Prostate gland (tissue), 2 donors: ENCODE measurements at regions of chr11 and their contacts with region 1.

Region 1: DNA sequence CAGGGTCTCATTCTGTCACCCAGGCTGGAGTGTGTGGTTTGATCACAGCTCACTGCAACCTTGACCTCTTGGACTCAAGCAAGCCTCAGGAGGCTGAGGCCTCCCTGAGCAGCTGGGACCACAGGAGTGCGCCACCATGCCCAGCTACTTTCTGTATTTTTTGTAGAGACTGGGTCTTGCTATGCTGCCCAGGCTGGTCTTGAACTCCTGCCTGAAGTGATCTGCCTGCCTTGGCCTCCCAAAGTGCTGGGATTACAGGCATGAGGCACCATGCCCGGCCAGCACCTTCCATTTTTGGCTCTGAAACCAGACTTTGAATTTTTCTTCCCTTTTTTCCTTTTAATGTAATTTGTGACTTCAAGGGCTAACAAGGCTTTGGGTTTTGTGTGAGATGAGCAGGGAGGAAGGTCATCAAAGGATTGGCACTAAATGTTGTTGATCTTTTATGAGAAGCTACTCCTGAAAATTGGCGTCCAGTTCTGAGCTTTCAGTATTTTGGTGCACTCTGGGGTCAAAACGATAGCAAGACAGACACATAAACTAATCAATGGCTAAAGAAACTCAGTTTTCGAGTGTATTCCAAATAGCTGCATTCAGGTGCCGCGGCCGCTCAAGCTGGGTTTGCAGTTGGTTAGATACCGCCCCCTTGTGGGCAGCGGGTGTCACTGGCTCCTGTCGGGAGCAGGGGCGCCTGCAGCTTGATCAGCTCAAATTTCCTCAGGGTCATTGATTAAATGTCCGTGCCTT is 51.9 kb upstream of the CLMP start:
- DNase-seq: peak; percentile 51
- H3K4me3 ChIP-seq: no peak overlapping the region
- H3K27ac ChIP-seq: no peak overlapping the region
- H3K4me1 ChIP-seq: no peaks in the 10 kb centered on the region
- H3K27me3 ChIP-seq: no peaks in the 10 kb centered on the region
- CTCF ChIP-seq: peak; percentile 59 to 93 (median 80)
- POLR2A ChIP-seq: no peak

Region 2: DNA sequence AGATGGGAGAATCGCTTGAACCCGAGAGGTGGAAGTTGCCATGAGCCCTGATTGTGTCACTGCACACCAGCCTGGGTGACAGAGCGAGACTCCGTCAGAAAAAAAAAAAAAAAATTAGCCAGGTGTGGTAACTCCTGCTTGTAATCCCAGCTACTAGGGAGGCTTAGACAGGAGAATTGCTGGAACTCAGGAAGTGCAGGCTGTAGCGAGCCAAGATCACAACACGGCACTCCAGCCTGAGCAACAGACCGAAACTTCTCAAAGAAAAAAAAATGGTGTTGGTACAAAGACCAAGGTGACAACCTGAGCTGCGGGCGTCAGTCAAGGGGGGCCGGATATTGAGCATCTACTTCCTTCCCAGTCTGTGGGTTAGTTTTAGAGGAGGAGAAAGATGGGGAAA is 136.6 kb before region 1 on chr11:
- intact Hi-C with region 1: loop called (anchors 5 kb)
- DNase-seq: no peak
- H3K4me3 ChIP-seq: no peak overlapping the region
- H3K27ac ChIP-seq: no peak overlapping the region
- H3K4me1 ChIP-seq: no peaks in the 10 kb centered on the region
- H3K27me3 ChIP-seq: no peaks in the 10 kb centered on the region
- CTCF ChIP-seq: no peak
- POLR2A ChIP-seq: no peak

Region 3: DNA sequence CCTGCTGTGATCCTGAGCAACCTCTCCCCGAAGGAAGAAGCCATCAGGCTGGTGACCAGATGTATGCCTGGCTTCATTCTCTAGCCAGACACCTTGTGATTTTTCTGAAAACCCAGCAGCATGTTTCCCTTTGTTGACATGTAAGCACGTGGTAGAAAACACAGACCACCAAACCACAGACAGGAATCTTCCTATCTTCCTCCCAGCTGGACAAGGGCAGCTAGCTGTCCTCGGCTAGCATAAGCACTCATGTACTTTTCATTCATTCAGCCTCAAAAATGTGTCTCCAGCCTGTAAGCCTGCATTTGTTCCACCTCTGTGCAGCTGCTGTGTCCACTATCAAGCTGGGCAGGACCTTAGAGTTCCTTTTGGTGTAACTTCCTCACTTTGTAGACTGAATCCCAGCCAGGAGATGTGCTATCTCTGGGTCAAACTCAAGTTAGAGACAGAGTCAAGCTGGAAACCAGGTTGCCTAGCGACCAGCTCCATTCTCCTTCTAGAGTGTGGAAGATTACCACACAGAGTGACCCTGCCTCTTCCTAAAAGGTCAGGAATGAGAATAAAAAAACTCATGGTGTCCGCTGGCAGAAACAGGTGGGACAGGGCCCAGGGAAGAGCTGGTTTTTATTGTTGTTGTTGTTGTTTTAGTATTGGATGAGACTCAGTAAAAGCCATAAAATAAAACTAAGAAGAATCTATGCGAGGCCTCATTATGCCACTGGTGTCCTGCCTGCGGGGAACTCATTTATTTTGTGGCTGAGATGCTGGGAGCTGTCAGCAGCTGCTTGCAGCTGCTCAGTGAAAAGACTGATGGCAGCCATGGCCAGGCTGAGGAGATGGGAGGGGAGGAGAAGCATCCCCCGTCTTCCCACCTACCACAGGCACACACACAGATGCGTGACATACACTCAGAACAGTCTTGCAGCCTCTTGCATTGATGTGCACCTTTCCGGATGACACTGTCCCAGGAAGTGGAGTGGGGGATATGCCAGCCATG is 44.5 kb before region 1 on chr11:
- intact Hi-C with region 1: no loop called
- DNase-seq: no peak
- H3K4me3 ChIP-seq: no peak overlapping the region
- H3K27ac ChIP-seq: no peak overlapping the region
- H3K4me1 ChIP-seq: no peaks in the 10 kb centered on the region
- H3K27me3 ChIP-seq: no peaks in the 10 kb centered on the region
- CTCF ChIP-seq: no peak
- POLR2A ChIP-seq: no peak